ENCODE measurements at regions of chrX and their contacts with region 1.

Region 1: DNA sequence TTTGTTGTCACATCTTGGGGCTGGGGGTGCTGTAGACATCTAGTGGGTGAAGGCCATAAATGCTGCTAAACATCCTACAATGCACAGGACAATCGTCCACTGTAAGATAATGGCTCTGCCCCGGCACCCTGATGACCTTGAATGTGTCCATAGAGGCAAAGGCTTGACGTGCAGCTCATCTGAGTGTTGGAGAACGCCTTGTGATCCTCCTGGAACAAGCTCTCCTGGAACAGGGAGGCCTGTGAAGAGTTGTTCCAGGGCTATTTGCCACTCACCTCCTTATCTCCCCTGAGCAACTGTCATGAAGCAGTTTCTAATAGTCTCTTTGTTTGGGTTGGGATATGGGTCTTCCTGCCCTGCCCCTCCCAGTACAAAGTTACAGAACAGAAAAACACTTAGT is 15.2 kb upstream of the PCYT1B start:
- H3K4me3 ChIP-seq: no peak overlapping the region
- H3K27ac ChIP-seq: no peak overlapping the region
- H3K4me1 ChIP-seq: no peaks in the 10 kb centered on the region
- CTCF ChIP-seq: no peak

Region 2: GRCh38 chrX:24651783-24652182 is 10.6 kb before region 1 on chrX:
- CTCF ChIA-PET with region 1: no interaction called
- POLR2A ChIA-PET with region 1: no interaction called
- H3K4me3 ChIP-seq: no peak overlapping the region
- H3K27ac ChIP-seq: no peak overlapping the region
- H3K4me1 ChIP-seq: no peaks in the 10 kb centered on the region
- CTCF ChIP-seq: no peak

Region 3: DNA sequence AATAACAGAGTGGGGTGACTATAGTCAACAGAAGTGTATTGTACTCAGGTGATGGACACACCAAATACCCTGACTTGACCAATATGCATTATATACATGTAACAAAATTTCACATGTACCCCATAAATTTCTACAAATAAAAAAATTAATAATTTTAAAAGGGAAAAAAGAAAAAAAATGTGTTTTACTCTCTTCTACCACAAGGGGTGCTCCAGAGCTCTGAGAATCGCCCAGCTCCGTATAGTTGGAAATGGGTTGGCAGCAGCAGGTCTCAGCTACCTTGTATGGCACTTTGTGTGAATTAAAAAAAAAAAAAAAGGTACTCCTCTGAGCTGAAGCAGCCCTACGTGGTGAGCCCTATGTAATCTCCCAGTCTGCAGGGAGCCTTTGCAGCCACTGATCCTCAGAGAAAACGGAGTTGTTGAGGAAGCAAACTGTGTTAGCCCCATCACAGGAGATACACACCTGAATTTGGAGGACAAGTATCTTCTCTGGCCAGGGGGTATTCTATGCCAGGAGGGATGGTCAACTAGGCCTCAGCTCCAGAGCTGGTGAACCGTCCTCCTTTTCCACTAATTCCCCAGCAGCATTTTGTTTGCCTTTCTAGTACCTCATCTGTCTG is 14.2 kb after region 1 on chrX:
- CTCF ChIA-PET with region 1: interaction called, 11 read pairs
- POLR2A ChIA-PET with region 1: interaction called, 5 read pairs
- H3K4me3 ChIP-seq: no peak overlapping the region
- H3K27ac ChIP-seq: no peak overlapping the region
- H3K4me1 ChIP-seq: no peaks in the 10 kb centered on the region
- CTCF ChIP-seq: no peak